PC-9 (cell line): ENCODE measurements at regions of chr9 and their contacts with region 1.

Region 1: DNA sequence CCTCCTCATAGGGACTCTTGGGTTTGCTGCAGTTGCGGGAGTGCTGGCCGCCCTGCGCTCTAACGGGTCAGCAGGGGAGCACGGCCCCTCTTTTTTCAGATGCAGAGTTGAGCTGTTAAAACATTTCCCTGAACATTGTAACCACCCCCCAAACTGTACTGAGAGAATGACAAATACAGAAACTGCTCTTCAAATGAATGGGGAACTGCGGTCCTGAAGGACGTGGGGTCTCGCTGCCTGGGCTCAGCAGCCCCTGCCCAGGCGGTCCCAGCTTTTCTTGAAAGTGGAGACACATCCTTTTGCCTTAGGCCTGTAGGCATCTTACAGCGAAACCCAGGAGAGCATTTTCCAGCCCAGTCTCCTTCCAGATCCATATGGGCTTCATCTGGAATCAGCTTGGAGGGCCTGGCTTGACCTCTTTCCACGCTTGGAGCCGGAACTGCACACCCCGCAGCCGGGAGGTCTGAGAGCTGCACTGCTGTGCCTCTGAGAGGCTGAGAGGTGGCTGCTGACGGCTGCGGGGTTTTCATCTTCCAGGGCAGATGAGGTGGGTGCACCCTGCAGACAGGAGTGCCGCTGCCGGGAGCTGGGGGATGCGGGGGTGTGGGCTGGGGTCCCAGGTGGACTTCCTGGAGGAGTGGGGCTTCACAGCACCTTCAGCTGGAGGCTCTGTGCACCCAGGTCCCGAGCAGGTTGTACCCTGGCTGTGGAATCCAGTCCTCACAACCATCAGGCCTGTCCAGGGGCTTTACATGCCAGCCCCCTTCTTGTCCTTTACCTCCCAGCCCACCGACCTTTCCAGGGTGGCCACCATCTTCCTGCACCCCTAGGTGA is 1.2 kb upstream of the AGPAT2 start:
- DNase-seq: no peak
- H3K4me3 ChIP-seq: peak overlapping the region; percentile 64; the same call in 1 of the 2 replicates
- H3K27ac ChIP-seq: no peak overlapping the region
- H3K4me1 ChIP-seq: peaks cover 37% of the 10 kb centered on the region
- H3K27me3 ChIP-seq: no peaks in the 10 kb centered on the region
- CTCF ChIP-seq: no peak

Region 2: DNA sequence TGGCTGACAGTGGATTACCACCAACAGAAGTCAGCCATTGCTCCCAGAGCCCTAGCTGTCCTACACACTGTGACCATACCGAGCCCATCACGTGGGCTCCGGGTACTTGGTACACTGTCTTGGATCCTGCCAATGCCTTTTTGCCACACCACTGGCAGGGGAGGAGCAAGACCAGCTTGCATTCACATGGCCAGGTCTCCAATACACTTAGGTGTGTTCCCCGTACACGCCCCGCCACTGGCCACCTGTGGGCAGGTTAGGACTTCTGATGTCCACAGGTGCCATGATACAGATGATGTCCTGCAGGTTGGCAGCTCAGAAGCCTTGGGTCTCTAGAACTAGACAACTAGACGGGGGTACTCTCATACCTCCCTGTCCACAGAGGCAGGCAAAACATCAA is 18.5 kb after region 1 on chr9:
- CTCF ChIA-PET with region 1: no interaction called
- POLR2A ChIA-PET with region 1: interaction called, 12 read pairs
- intact Hi-C with region 1: no loop called
- DNase-seq: no peak
- H3K4me3 ChIP-seq: no peak overlapping the region
- H3K27ac ChIP-seq: no peak overlapping the region
- H3K4me1 ChIP-seq: no peaks in the 10 kb centered on the region
- H3K27me3 ChIP-seq: no peaks in the 10 kb centered on the region
- CTCF ChIP-seq: no peak